Dendritic cell treated with granulocyte-macrophage colony-stimulating factor and Interleukin-4, amounts not matched to agents 40 ng/mL and 50 ng/mL, for 4 days (primary cell): ENCODE measurements at regions of chr11 and their contacts with region 1.

Region 1: DNA sequence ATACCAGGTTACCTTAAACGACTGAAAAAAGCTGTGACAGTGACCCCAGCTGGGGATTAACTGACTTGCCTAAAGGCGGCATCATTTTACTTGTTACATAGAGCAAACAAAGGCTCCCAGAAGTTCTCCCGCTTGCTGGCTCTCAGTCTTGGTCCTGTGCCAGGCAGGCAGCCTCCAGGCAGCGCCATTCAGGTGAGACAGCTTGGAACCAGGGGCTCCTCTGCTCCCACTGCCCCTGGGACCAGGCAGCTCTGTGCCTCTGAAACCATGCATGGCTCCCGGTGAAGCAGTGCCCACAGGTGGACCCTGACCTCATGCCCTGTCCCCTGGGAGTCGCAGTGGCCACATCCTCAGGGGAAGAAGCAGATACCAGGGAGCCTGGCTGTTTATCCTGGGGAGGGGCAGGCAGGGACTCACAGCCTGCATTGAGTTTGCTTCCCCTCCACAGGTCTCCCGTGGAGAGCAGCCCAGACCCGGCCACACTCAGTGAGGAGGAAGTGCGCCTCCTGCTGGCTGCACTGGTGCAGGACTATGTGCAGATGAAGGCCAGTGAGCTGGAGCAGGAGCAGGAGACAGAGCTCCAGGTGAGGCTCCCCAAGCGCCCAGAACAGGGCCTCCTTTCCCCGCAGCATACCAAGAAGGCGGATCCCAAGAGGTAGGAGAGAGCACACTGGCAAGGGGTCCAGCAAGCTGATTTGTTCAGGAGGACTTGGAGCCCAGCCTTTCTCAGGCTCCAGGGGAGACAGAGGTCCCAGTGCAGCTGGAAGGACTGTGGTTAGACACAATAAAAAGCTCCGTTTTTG is 15.6 kb upstream of the CYP2R1 start:
- H3K4me3 Mint-ChIP-seq: no peak overlapping the region
- H3K27ac Mint-ChIP-seq: no peak overlapping the region
- H3K4me1 Mint-ChIP-seq: peaks cover 36% of the 10 kb centered on the region
- H3K27me3 Mint-ChIP-seq: peaks cover 32% of the 10 kb centered on the region

Region 2: GRCh38 chr11:14519917-14520746 is 387.5 kb before region 1 on chr11 and contains the start of gene PSMA1:
- intact Hi-C with region 1: loop called (anchors 5 kb)
- H3K4me3 Mint-ChIP-seq: peak within 1 kb of the TSS; percentile 89
- H3K27ac Mint-ChIP-seq: peak within 1 kb of the TSS; percentile 97
- H3K4me1 Mint-ChIP-seq: peaks cover 16% of the 10 kb centered on the region
- H3K27me3 Mint-ChIP-seq: no peaks in the 10 kb centered on the region

Region 3: GRCh38 chr11:14643697-14644225 is 263.9 kb before region 1 on chr11 and contains the start of gene PDE3B:
- intact Hi-C with region 1: loop called (anchors 5 kb)
- H3K4me3 Mint-ChIP-seq: peak within 1 kb of the TSS; percentile 87
- H3K27ac Mint-ChIP-seq: peak within 1 kb of the TSS; percentile 81
- H3K4me1 Mint-ChIP-seq: peaks cover 23% of the 10 kb centered on the region
- H3K27me3 Mint-ChIP-seq: peaks cover 1% of the 10 kb centered on the region

Region 4: GRCh38 chr11:14892036-14892567 is 15.5 kb before region 1 on chr11 and contains the start of gene CYP2R1:
- intact Hi-C with region 1: loop called (anchors 1 kb)
- H3K4me3 Mint-ChIP-seq: peak within 1 kb of the TSS; percentile 98
- H3K27ac Mint-ChIP-seq: peak within 1 kb of the TSS; percentile 91
- H3K4me1 Mint-ChIP-seq: peaks cover 62% of the 10 kb centered on the region
- H3K27me3 Mint-ChIP-seq: no peaks in the 10 kb centered on the region

Region 5: DNA sequence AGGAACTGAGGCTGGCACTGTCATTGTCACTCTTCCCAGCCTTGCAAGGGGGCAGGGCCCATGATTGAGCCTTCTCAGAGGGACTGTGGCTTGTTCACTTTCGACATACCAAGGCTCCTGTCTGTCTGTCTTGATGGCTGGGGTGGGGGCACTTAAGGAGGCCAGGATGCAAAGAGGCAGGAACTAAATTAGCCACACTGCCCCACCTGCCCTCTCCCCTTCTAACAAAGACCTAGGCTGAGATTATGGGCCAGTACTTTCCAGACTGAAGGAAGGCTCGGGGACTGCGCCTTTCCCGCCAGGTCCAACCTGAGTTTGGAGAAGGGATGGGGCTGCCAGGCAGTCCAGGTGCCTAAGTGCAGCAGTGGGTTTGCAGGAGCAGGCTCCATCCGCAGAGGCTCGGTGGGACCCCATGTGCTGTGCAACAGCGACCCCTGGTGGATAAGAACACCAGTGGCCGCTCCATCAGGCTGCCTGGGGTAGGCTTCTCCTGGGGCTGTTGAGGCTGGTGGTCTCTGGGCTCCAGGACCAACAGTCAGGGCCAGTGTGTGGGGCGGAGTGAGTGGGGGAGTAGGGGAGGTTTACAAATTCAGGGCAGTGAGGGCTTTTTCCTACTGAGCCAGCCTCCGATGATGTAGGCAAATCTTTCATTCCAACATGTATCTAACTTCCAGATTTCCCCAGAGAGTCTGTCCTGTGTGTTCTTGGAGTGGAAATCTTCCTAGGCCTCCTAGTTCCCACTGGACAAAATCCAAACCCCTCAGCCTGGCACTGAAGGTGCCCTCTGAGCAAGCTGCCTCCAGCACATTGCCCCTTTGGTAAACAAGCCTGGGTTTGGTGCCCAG is 301.0 kb after region 1 on chr11:
- intact Hi-C with region 1: loop called (anchors 5 kb)
- H3K4me3 Mint-ChIP-seq: no peak overlapping the region
- H3K27ac Mint-ChIP-seq: no peak overlapping the region
- H3K4me1 Mint-ChIP-seq: no peaks in the 10 kb centered on the region
- H3K27me3 Mint-ChIP-seq: no peaks in the 10 kb centered on the region